ENCODE measurements at regions of chr15 and their contacts with region 1.

Region 1: GRCh38 chr15:78108299-78109084 is 16.1 kb downstream of the SH2D7 start:
- DNase-seq: peak; percentile 41 to 93
- H3K4me3 ChIP-seq: no peak overlapping the region
- H3K27ac ChIP-seq: no peak overlapping the region
- H3K4me1 ChIP-seq: no peaks in the 10 kb centered on the region
- H3K27me3 ChIP-seq: no peaks in the 10 kb centered on the region
- CTCF ChIP-seq: peak; percentile 91 to 96 (median 95)

Region 2: GRCh38 chr15:77959432-77959879 is 149.0 kb before region 1 on chr15:
- intact Hi-C with region 1: loop called (anchors 1 kb)
- DNase-seq: peak; percentile 21 to 87
- H3K4me3 ChIP-seq: peak overlapping the region in 1 of 2 donors; percentile 41
- H3K27ac ChIP-seq: no peak overlapping the region
- H3K4me1 ChIP-seq: no peaks in the 10 kb centered on the region
- H3K27me3 ChIP-seq: no peaks in the 10 kb centered on the region
- CTCF ChIP-seq: peak; percentile 93 to 99 (median 94)

Region 3: GRCh38 chr15:77966540-77967290 is 141.8 kb before region 1 on chr15:
- intact Hi-C with region 1: loop called (anchors 1 kb)
- DNase-seq: no peak
- H3K4me3 ChIP-seq: no peak overlapping the region
- H3K27ac ChIP-seq: no peak overlapping the region
- H3K4me1 ChIP-seq: no peaks in the 10 kb centered on the region
- H3K27me3 ChIP-seq: no peaks in the 10 kb centered on the region
- CTCF ChIP-seq: peak; percentile 79 to 90 (median 89)

Region 4: GRCh38 chr15:78195735-78196201 is 87.3 kb after region 1 on chr15:
- intact Hi-C with region 1: loop called (anchors 1 kb)
- DNase-seq: peak in 1 of 2 donors; percentile 63
- H3K4me3 ChIP-seq: no peak overlapping the region
- H3K27ac ChIP-seq: no peak overlapping the region
- H3K4me1 ChIP-seq: no peaks in the 10 kb centered on the region
- H3K27me3 ChIP-seq: no peaks in the 10 kb centered on the region
- CTCF ChIP-seq: peak; percentile 60 to 69 (median 63)

Region 5: DNA sequence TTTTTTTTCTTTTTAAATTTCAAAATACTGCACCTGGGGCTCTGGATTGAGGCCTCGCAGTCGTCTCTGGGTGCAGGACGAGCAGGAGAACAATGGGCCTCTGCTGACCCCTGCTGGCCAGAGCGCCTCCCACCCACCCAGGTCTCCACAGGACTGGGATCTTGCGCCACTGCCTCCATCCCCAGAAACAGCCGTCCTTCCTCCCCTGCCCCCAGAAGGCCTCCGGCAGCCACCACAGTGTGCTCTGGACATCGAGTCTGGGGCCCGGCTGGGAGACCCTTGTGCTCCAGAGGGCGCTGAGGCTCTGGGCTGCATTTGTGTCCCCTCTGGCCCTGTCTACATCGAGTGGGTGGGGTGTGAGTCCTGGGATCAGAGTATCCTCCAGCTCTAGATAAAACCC is 132.5 kb after region 1 on chr15:
- intact Hi-C with region 1: loop called (anchors 1 kb)
- DNase-seq: peak in 1 of 2 donors; percentile 86
- H3K4me3 ChIP-seq: no peak overlapping the region
- H3K27ac ChIP-seq: no peak overlapping the region
- H3K4me1 ChIP-seq: no peaks in the 10 kb centered on the region
- H3K27me3 ChIP-seq: no peaks in the 10 kb centered on the region
- CTCF ChIP-seq: peak; percentile 72 to 87 (median 84)

Region 6: DNA sequence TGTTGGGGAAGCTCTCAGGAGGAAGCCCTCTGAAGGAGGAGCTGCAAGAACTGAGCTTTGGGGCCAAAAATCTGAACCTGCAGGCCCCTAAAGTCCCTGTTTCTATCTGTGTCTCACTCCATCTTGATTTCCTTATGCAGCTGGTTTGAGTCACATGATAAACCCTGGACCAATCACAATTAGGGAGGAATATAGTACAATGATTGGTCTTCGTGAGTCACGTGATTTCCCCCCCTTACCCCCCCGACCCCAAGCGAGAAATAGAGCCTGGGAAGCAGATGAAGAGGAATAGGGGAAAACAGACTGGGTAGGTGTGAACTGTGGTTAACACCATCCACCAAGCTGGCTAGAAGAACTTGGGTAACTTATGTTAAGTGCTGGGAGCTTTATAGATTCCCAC is 244.6 kb after region 1 on chr15:
- intact Hi-C with region 1: no loop called
- DNase-seq: no peak
- H3K4me3 ChIP-seq: no peak overlapping the region
- H3K27ac ChIP-seq: no peak overlapping the region
- H3K4me1 ChIP-seq: no peaks in the 10 kb centered on the region
- H3K27me3 ChIP-seq: no peaks in the 10 kb centered on the region
- CTCF ChIP-seq: no peak

Region 7: GRCh38 chr15:78422571-78423340 is 314.3 kb after region 1 on chr15:
- intact Hi-C with region 1: loop called (anchors 5 kb)
- DNase-seq: peak in 1 of 2 donors; percentile 67
- H3K4me3 ChIP-seq: no peak overlapping the region
- H3K27ac ChIP-seq: no peak overlapping the region
- H3K4me1 ChIP-seq: no peaks in the 10 kb centered on the region
- H3K27me3 ChIP-seq: no peaks in the 10 kb centered on the region
- CTCF ChIP-seq: peak; percentile 52 to 86 (median 85)

Measured in ascending aorta (tissue), 2 donors.